MCF 10A (cell line): ENCODE measurements at regions of chr7 and their contacts with region 1.

Region 1: DNA sequence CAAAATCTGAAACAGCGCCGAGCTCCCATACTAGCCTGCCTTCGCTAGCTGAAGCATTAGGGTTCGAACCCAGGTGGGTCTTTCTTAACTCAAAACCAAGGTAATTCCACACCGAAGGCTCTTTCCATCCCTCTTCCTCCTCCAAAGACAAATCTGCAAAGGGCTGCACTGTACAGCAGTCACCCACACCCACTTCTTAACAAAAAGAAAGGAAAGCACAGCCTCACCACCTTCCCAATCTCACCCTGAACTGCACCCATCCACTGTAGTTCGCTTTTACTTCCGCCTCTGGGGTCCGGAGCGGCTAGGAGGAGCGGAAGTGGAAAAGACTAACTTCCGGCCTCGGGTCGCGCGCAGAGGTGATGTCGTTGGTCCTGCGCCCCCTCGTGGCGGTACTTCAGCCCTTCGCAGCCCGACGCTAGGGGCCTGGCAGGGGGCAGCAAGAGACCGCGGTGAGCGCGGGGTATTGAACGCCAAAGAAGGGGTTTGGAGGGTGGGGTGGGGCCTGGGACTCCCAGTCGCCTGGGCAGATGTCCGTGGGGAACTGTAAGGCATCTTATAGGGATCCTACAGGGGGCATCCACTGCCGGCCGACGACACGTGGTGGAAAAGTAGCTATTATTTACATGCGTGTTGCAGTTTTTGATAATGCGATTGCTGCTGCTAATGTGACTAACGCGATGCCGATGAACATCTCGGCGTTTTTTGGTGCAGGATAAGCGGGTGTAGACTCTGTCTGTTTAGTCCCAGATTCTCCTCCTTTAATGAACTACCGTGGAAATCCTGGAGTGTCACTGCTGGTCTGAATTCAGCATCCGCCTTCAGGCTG is at the start of gene MTERF1:
- DNase-seq: peak; percentile 93
- H3K4me3 Mint-ChIP-seq: peak within 1 kb of the TSS; percentile 97
- H3K27ac Mint-ChIP-seq: peak within 1 kb of the TSS; percentile 98
- H3K4me1 Mint-ChIP-seq: peaks cover 33% of the 10 kb centered on the region
- H3K27me3 Mint-ChIP-seq: no peaks in the 10 kb centered on the region
- CTCF ChIP-seq: peak; percentile 94
- total RNA-seq, gene MTERF1: 12.9 and 17.6 TPM in 2 replicates

Region 2: GRCh38 chr7:91089382-91089963 is 791.2 kb before region 1 on chr7:
- CTCF ChIA-PET with region 1: interaction called, 16 read pairs
- POLR2A ChIA-PET with region 1: no interaction called
- intact Hi-C with region 1: no loop called
- DNase-seq: peak; percentile 61
- H3K4me3 Mint-ChIP-seq: peak overlapping the region; percentile 56
- H3K27ac Mint-ChIP-seq: no peak overlapping the region
- H3K4me1 Mint-ChIP-seq: no peaks in the 10 kb centered on the region
- H3K27me3 Mint-ChIP-seq: no peaks in the 10 kb centered on the region
- CTCF ChIP-seq: peak; percentile 70

Region 3: DNA sequence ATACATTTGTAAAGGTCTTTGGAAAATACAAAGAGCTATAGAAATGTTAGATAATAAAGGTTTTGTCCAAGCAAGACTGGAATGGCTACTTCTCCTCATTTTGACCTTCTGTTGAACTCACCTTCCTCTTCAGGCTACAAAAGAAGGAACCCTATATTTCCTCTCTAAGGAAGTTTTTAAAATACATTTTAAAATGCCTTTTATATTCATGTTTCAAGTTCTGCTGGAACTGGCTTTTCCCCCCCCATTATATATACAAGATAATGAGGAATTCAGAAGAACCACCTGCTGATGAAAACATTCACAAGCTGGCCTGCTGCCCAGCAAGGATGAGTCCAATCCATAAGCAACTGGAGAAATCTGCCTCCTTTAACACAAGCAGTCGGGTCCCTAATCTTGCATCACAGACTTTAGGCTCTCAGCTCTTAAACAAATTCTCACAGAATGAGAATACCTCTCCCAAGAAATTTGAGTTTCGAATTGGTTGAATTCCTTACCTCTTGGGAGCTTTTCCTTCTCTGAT is 44.7 kb before region 1 on chr7:
- CTCF ChIA-PET with region 1: interaction called, 276 read pairs
- POLR2A ChIA-PET with region 1: interaction called, 10 read pairs
- intact Hi-C with region 1: no loop called
- DNase-seq: peak; percentile 51
- H3K4me3 Mint-ChIP-seq: no peak overlapping the region
- H3K27ac Mint-ChIP-seq: no peak overlapping the region
- H3K4me1 Mint-ChIP-seq: no peaks in the 10 kb centered on the region
- H3K27me3 Mint-ChIP-seq: no peaks in the 10 kb centered on the region
- CTCF ChIP-seq: no peak

Region 4: GRCh38 chr7:91892821-91893340 is 12.3 kb after region 1 on chr7:
- CTCF ChIA-PET with region 1: interaction called, 28 read pairs
- POLR2A ChIA-PET with region 1: interaction called, 5 read pairs
- intact Hi-C with region 1: no loop called
- DNase-seq: no peak
- H3K4me3 Mint-ChIP-seq: no peak overlapping the region
- H3K27ac Mint-ChIP-seq: no peak overlapping the region
- H3K4me1 Mint-ChIP-seq: peaks cover 8% of the 10 kb centered on the region
- H3K27me3 Mint-ChIP-seq: no peaks in the 10 kb centered on the region
- CTCF ChIP-seq: no peak

Region 5: DNA sequence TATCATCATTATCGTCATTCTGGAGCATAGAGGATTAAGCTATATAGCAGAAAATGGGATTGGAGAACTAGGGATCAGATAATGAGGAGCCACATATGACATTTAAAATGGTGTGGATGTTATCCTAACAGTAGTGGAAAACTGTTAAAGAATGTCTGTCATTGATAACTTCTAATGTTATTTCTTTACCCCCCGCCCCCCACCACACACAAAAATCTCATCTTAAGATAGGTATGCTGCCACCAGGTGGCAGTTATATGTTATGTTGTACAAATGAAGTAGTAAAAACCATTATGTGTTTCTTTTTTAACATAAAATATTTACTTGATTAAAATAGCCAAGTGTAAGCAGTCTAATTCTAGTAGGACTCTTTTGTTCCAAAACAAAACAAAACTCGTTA is 73.0 kb after region 1 on chr7:
- CTCF ChIA-PET with region 1: interaction called, 3 read pairs
- POLR2A ChIA-PET with region 1: no interaction called
- intact Hi-C with region 1: loop called (anchors 2 kb)
- DNase-seq: no peak
- H3K4me3 Mint-ChIP-seq: no peak overlapping the region
- H3K27ac Mint-ChIP-seq: peak overlapping the region; percentile 21
- H3K4me1 Mint-ChIP-seq: peaks cover 19% of the 10 kb centered on the region
- H3K27me3 Mint-ChIP-seq: no peaks in the 10 kb centered on the region
- CTCF ChIP-seq: peak; percentile 12

Region 6: GRCh38 chr7:92134271-92135051 is 253.8 kb after region 1 on chr7 and contains the start of gene CYP51A1:
- CTCF ChIA-PET with region 1: interaction called, 4 read pairs
- POLR2A ChIA-PET with region 1: interaction called, 5 read pairs
- intact Hi-C with region 1: loop called (anchors 2 kb)
- DNase-seq: peak; percentile 94
- H3K4me3 Mint-ChIP-seq: peak within 1 kb of the TSS; percentile 90
- H3K27ac Mint-ChIP-seq: peak within 1 kb of the TSS; percentile 98
- H3K4me1 Mint-ChIP-seq: peaks cover 27% of the 10 kb centered on the region
- H3K27me3 Mint-ChIP-seq: no peaks in the 10 kb centered on the region
- CTCF ChIP-seq: no peak
- total RNA-seq, gene CYP51A1: 124 and 148 TPM in 2 replicates

Region 7: GRCh38 chr7:92447345-92448204 is 566.9 kb after region 1 on chr7 and contains the start of gene GATAD1:
- CTCF ChIA-PET with region 1: interaction called, 4 read pairs
- POLR2A ChIA-PET with region 1: interaction called, 7 read pairs
- intact Hi-C with region 1: loop called (anchors 1 kb)
- DNase-seq: peak; percentile 93
- H3K4me3 Mint-ChIP-seq: peak within 1 kb of the TSS; percentile 85
- H3K27ac Mint-ChIP-seq: peak within 1 kb of the TSS; percentile 89
- H3K4me1 Mint-ChIP-seq: no peaks in the 10 kb centered on the region
- H3K27me3 Mint-ChIP-seq: no peaks in the 10 kb centered on the region
- CTCF ChIP-seq: peak; percentile 88
- total RNA-seq, gene GATAD1: 41.2 and 44.2 TPM in 2 replicates